T-cell (primary cell): ENCODE measurements at regions of chr18 and their contacts with region 1.

Region 1: GRCh38 chr18:2846636-2847364 is at the start of gene EMILIN2:
- DNase-seq: peak in 34 of 35 experiments; percentile 8 to 74 (median 40)
- ATAC-seq: peak; percentile 44 to 63 (median 50)
- H3K4me3 ChIP-seq: peak within 1 kb of the TSS; percentile 52 to 85
- H3K4me3 Mint-ChIP-seq: peak within 1 kb of the TSS; percentile 77 to 91 (median 86)
- H3K27ac ChIP-seq: no peak within 1 kb of the TSS
- H3K27ac Mint-ChIP-seq: no peak within 1 kb of the TSS
- H3K4me1 ChIP-seq: peaks cover 4 to 23% of the 10 kb centered on the region in 2 experiments
- H3K4me1 Mint-ChIP-seq: peaks cover 22 to 24% (median 23%) of the 10 kb centered on the region in 3 donors
- H3K27me3 ChIP-seq: peaks cover 5 to 48% of the 10 kb centered on the region in 2 experiments
- H3K27me3 Mint-ChIP-seq: peaks cover 43 to 48% of the 10 kb centered on the region in 2 donors
- total RNA-seq, gene EMILIN2: 3.3 to 19.2 (median 15.0) TPM

Region 2: DNA sequence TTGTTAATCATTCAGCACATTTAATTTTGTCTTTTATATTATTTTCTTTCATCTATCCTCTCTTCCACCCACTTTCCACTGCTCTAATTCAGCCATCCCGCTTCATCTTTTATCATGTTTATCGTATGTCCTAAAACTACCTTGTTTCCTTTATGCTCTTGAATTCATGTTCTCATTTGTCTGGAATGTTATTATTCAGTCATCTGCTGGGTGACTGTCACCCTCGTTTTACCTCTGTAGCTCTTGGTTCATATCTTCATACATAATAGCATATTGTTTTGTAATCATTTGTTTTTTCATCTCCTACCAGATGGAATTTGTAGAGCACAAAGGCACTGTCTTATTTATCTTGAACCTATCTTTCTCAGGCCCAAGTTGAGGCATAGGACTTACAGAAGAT is 154.3 kb before region 1 on chr18:
- CTCF ChIA-PET with region 1: no interaction called
- POLR2A ChIA-PET with region 1: no interaction called
- DNase-seq: no peak
- ATAC-seq: no peak
- H3K4me3 ChIP-seq: no peak overlapping the region
- H3K4me3 Mint-ChIP-seq: no peak overlapping the region
- H3K27ac ChIP-seq: no peak overlapping the region
- H3K27ac Mint-ChIP-seq: peak overlapping the region in 1 of 2 donors; percentile 56
- H3K4me1 ChIP-seq: peaks cover 0 to 2% of the 10 kb centered on the region in 2 experiments
- H3K4me1 Mint-ChIP-seq: peaks cover 34 to 50% (median 44%) of the 10 kb centered on the region in 3 donors
- H3K27me3 ChIP-seq: no peaks in the 10 kb centered on the region
- H3K27me3 Mint-ChIP-seq: no peaks in the 10 kb centered on the region

Region 3: DNA sequence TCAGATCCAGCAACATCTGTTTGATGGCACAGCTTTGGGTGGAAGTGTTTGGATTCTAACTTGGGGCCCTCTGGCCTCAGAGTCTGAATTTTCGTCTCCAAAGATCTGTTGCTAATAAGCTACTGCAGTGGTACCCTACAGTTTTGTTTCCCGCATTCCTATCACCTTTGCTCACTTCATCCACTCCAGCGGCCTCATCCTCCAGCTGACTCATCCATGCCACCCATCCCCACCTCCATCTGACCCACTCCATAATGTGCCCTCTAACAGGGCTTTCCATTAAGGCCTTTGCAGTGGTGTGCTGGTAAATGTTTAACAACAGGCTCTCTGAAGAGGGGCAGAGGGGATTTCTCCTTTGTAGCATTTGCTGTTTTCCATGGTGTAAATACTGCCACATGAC is 828.6 kb after region 1 on chr18:
- CTCF ChIA-PET with region 1: interaction called in 1 of 2 experiments, 12 read pairs
- POLR2A ChIA-PET with region 1: no interaction called
- DNase-seq: no peak
- ATAC-seq: no peak
- H3K4me3 ChIP-seq: no peak overlapping the region
- H3K4me3 Mint-ChIP-seq: no peak overlapping the region
- H3K27ac ChIP-seq: no peak overlapping the region
- H3K27ac Mint-ChIP-seq: no peak overlapping the region
- H3K4me1 ChIP-seq: no peaks in the 10 kb centered on the region
- H3K4me1 Mint-ChIP-seq: no peaks in the 10 kb centered on the region
- H3K27me3 ChIP-seq: peaks cover 0 to 3% of the 10 kb centered on the region in 2 experiments
- H3K27me3 Mint-ChIP-seq: peaks cover 16 to 17% of the 10 kb centered on the region in 2 donors